HCT116 (cell line): ENCODE measurements at regions of chr15 and their contacts with region 1.

Region 1: DNA sequence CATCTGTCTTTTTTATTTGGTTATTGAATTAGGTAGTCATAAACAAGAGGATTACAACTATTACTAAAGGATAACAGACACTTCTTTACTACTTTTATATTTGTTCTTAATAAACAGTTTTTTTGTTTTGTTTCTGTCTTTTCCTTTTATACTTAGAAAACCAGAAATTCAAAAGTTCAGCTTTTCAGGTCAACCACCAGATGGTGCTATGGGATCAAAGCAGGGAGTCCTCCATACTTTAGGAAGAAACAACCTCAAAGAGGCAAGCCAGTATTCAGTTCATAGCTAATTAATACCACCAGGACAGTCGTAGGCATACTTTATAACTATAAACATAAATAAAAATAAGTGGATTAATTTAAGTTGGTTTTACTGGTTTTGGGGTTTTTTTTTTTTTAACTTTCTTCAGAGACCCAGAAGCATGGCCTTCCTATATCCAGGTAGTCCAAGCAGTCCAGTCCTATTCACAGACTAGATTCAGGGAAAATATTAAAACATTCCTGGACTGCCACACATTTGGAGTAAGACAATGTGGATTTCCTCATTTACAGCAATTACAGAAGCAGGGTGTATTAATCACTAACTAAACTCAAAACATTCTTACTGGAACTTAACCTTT is 16.0 kb upstream of the EID1 start:
- DNase-seq: peak; percentile 58
- ATAC-seq: peak; percentile 78
- H3K4me3 ChIP-seq: no peak overlapping the region
- H3K27ac ChIP-seq: no peak overlapping the region
- H3K4me1 ChIP-seq: no peaks in the 10 kb centered on the region
- H3K27me3 ChIP-seq: no peaks in the 10 kb centered on the region
- CTCF ChIP-seq: peak; percentile 79 to 92 (median 83); a peak in 5 of 6 replicates
- POLR2A ChIP-seq: no peak
- RAD21 ChIP-seq: peak; percentile 93

Region 2: GRCh38 chr15:48657950-48658591 is 203.9 kb before region 1 on chr15:
- CTCF ChIA-PET with region 1: no interaction called
- POLR2A ChIA-PET with region 1: no interaction called
- RAD21 ChIA-PET with region 1: no interaction called
- intact Hi-C with region 1: no loop called
- DNase-seq: no peak
- ATAC-seq: no peak
- H3K4me3 ChIP-seq: no peak overlapping the region
- H3K27ac ChIP-seq: no peak overlapping the region
- H3K4me1 ChIP-seq: no peaks in the 10 kb centered on the region
- H3K27me3 ChIP-seq: no peaks in the 10 kb centered on the region
- CTCF ChIP-seq: no peak
- POLR2A ChIP-seq: no peak
- RAD21 ChIP-seq: no peak

Region 3: DNA sequence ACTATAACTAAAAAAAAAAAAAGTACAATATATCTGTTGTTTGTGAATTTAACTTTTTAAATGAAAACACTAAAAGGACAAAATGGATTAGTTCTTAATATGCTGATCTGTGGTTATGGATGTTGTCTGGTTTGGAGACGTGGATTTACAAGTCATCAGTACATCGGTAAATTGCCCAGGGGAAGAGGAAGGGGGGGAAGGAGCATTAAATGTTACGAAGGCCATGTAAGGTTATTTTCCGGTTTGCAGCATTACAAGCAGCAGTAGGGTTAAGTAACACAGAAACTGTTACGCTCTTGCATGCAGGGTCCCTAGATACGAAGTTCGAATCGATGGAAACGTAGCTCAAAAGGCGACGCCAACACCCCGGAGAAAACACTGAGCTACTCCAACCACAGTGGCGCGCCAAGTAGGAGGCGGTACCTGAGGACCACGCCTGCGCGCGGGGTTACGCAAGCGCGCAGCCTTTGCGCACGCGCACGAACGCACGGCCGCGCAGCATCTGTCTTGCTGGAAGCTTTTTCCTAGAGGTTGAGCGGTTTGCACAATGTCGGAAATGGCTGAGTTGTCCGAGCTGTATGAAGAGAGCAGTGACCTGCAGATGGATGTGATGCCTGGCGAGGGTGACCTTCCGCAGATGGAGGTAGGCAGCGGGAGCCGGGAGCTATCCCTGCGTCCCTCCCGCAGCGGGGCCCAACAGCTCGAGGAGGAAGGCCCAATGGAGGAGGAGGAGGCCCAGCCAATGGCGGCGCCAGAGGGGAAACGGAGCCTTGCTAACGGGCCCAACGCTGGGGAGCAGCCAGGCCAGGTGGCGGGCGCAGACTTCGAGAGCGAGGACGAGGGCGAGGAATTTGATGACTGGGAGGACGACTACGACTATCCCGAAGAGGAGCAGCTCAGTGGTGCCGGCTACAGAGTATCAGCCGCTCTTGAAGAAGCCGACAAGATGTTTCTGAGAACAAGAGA is 16.0 kb after region 1 on chr15 and contains the start of gene EID1:
- CTCF ChIA-PET with region 1: interaction called, 14 read pairs
- POLR2A ChIA-PET with region 1: interaction called, 3 read pairs
- RAD21 ChIA-PET with region 1: no interaction called
- intact Hi-C with region 1: no loop called
- DNase-seq: peak; percentile 85
- ATAC-seq: peak; percentile 96
- H3K4me3 ChIP-seq: peak within 1 kb of the TSS; percentile 91 to 97
- H3K27ac ChIP-seq: peak within 1 kb of the TSS; percentile 69
- H3K4me1 ChIP-seq: peaks cover 3 to 11% of the 10 kb centered on the region in 2 experiments; a peak in 2 of 4 replicates
- H3K27me3 ChIP-seq: no peaks in the 10 kb centered on the region
- CTCF ChIP-seq: no peak
- POLR2A ChIP-seq: peak; percentile 94
- RAD21 ChIP-seq: no peak
- total RNA-seq, gene EID1: 68.6 TPM

Region 4: DNA sequence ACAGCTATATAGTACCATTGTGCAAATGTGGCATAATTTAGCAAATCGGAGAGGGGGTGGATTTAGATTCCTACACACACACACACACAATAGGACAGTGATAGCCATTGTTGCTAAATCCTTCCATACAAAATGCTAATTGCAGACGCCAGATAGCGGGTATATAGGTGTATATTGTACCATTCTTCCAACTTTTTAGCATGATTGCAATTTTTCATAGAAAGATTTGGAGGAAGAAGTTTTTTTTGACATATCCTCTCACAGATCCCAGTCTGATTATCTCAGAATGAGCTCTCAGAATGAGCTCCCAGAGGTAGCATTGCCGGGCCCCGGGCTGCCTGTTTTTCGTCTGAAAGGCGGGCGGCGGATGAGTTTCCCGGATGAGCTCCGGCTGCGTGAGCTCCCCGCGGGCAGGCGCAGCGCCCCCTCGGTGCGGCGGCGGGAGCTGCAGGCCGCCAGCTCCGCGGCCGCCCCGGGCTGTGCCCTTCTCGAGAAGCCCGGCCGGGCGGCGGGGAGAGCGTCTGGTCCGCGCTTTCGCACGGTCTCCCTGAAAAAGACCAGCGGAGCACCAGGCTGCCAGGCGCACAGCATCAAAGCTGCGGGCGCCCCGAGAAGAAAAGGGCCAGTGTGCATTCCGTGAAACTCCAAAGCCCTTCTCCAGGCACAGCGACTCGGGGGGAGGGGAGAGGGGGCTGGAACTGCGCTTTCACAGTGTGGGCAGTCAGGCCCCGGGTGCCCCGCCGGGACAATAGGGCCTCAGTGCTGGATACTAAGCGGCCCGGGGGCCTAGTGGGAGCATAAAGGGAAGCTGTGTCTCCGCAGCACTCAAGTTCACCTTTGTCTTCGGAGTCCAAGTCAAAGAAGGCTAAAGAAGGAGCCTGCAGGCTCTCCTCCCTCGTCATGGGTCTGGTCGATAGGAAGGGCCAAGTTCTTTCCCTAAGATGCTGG is 113.8 kb after region 1 on chr15:
- CTCF ChIA-PET with region 1: interaction called, 35 read pairs
- POLR2A ChIA-PET with region 1: no interaction called
- RAD21 ChIA-PET with region 1: interaction called in 1 of 2 experiments, 7 read pairs
- intact Hi-C with region 1: no loop called
- DNase-seq: peak; percentile 51
- ATAC-seq: peak; percentile 96
- H3K4me3 ChIP-seq: peak overlapping the region; percentile 47 to 58
- H3K27ac ChIP-seq: no peak overlapping the region
- H3K4me1 ChIP-seq: peaks cover 5 to 14% of the 10 kb centered on the region in 2 experiments; a peak in 3 of 4 replicates
- H3K27me3 ChIP-seq: no peaks in the 10 kb centered on the region
- CTCF ChIP-seq: peak in 2 of 3 experiments; percentile 70 to 90; a peak in 4 of 6 replicates
- POLR2A ChIP-seq: no peak
- RAD21 ChIP-seq: peak; percentile 29

Region 5: DNA sequence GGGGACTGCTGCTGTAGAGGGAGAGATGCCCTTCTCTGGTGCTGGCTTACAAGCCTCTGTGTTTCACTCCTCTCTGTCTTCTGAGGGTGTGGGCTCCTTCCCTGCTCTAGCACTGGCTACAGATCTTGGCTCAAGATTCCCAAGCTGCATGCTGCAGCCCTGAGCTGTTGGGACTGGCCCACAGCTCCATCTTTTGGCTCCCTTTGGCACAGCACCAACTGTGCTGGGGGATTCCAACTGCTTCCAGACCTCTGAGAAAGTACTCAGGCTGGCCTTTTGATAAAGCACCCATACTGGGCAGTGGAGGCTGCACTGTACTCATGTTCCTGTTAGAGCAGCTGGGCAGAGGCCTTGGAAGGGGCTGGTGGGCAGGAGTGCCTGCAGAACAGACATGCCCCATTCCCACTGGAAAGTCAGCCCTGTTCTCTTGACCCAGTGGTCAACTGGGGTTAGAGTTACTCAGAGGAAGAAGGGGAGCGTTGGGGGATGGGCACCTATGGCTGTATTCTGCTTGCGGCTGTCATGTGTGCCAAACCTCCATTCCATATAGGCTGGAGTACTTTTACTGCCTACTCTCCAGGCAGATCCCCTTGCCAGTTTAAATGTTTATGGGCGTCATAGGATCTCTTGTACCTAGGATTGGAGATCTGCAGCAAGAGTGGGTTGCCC is 363.8 kb after region 1 on chr15:
- CTCF ChIA-PET with region 1: interaction called, 10 read pairs
- POLR2A ChIA-PET with region 1: no interaction called
- RAD21 ChIA-PET with region 1: interaction called in 1 of 2 experiments, 3 read pairs
- intact Hi-C with region 1: loop called (anchors 1 kb)
- DNase-seq: peak; percentile 15
- ATAC-seq: peak; percentile 80
- H3K4me3 ChIP-seq: no peak overlapping the region
- H3K27ac ChIP-seq: no peak overlapping the region
- H3K4me1 ChIP-seq: no peaks in the 10 kb centered on the region
- H3K27me3 ChIP-seq: no peaks in the 10 kb centered on the region
- CTCF ChIP-seq: peak in 2 of 3 experiments; percentile 21 to 42; a peak in 3 of 6 replicates
- POLR2A ChIP-seq: no peak
- RAD21 ChIP-seq: peak; percentile 55

Region 6: GRCh38 chr15:49458145-49458544 is 596.2 kb after region 1 on chr15:
- CTCF ChIA-PET with region 1: no interaction called
- POLR2A ChIA-PET with region 1: no interaction called
- RAD21 ChIA-PET with region 1: no interaction called
- intact Hi-C with region 1: no loop called
- DNase-seq: no peak
- ATAC-seq: no peak
- H3K4me3 ChIP-seq: no peak overlapping the region
- H3K27ac ChIP-seq: no peak overlapping the region
- H3K4me1 ChIP-seq: no peaks in the 10 kb centered on the region
- H3K27me3 ChIP-seq: no peaks in the 10 kb centered on the region
- CTCF ChIP-seq: no peak
- POLR2A ChIP-seq: no peak
- RAD21 ChIP-seq: no peak

Region 7: GRCh38 chr15:49620658-49621368 is 758.9 kb after region 1 on chr15 and contains the starts of genes DTWD1 and FAM227B:
- CTCF ChIA-PET with region 1: no interaction called
- POLR2A ChIA-PET with region 1: no interaction called
- RAD21 ChIA-PET with region 1: no interaction called
- intact Hi-C with region 1: loop called (anchors 5 kb)
- DNase-seq: peak; percentile 93
- ATAC-seq: peak; percentile 99
- H3K4me3 ChIP-seq: peak within 1 kb of the TSS; percentile 63 to 88
- H3K27ac ChIP-seq: peak within 1 kb of the TSS; percentile 68
- H3K4me1 ChIP-seq: peaks cover 10 to 16% of the 10 kb centered on the region in 2 experiments; a peak in 3 of 4 replicates
- H3K27me3 ChIP-seq: no peaks in the 10 kb centered on the region
- CTCF ChIP-seq: no peak
- POLR2A ChIP-seq: peak; percentile 85
- RAD21 ChIP-seq: no peak
- total RNA-seq, gene DTWD1: 34.5 TPM
- total RNA-seq, gene FAM227B: 6.9 TPM

Region 8: GRCh38 chr15:50051803-50052419 is 1190.0 kb after region 1 on chr15:
- CTCF ChIA-PET with region 1: interaction called, 3 read pairs
- POLR2A ChIA-PET with region 1: no interaction called
- RAD21 ChIA-PET with region 1: no interaction called
- intact Hi-C with region 1: loop called (anchors 5 kb)
- DNase-seq: peak; percentile 41
- ATAC-seq: peak; percentile 73
- H3K4me3 ChIP-seq: no peak overlapping the region
- H3K27ac ChIP-seq: no peak overlapping the region
- H3K4me1 ChIP-seq: no peaks in the 10 kb centered on the region
- H3K27me3 ChIP-seq: no peaks in the 10 kb centered on the region
- CTCF ChIP-seq: peak; percentile 42 to 74 (median 64); a peak in 5 of 6 replicates
- POLR2A ChIP-seq: no peak
- RAD21 ChIP-seq: peak; percentile 72